ENCODE measurements at regions of chr5 and their contacts with region 1.

Region 1: DNA sequence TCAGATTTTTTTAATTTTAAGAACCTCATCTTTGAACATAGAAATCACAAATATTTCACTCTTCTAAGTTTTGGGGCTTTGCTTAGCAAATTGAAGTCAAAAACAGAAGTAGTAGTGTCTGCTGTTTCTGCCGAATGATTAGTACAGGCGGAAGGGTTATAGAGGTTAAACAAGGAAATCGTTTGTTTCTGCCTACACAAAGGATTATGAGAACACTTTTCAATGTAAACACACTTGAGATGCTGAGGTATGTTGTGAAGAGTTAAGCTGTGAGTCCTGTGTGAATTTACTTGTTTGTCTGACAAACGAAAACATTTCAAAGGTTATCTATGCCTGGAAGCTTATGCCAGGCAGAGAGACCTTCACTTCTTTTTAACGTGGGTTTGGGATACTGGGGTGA is 224.8 kb downstream of the CETN3 start:
- DNase-seq: no peak
- H3K4me3 ChIP-seq: no peak overlapping the region
- H3K27ac ChIP-seq: no peak overlapping the region
- H3K4me1 ChIP-seq: no peaks in the 10 kb centered on the region
- H3K27me3 ChIP-seq: no peaks in the 10 kb centered on the region
- CTCF ChIP-seq: no peak

Region 2: DNA sequence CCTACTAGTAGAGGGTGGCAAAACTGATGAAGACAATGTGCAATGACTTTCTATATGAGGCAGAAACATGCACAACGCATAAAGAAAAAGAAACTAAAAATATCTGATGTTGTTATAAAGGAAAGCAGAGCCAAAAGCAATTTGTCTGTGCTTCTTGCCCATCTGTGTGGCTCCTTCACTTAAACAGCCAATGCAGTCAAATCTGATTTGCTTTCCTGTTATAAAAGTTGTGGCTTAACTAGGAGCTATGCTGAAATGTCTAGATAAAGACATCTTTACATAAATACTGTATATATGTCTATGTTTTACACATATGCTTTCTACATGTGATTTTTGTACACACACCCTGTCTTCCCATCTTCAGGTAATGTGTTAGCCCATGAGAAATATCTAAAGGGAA is 283.4 kb before region 1 on chr5:
- CTCF ChIA-PET with region 1: no interaction called
- POLR2A ChIA-PET with region 1: no interaction called
- intact Hi-C with region 1: no loop called
- DNase-seq: no peak
- H3K4me3 ChIP-seq: no peak overlapping the region
- H3K27ac ChIP-seq: no peak overlapping the region
- H3K4me1 ChIP-seq: no peaks in the 10 kb centered on the region
- H3K27me3 ChIP-seq: no peaks in the 10 kb centered on the region
- CTCF ChIP-seq: no peak

Region 3: DNA sequence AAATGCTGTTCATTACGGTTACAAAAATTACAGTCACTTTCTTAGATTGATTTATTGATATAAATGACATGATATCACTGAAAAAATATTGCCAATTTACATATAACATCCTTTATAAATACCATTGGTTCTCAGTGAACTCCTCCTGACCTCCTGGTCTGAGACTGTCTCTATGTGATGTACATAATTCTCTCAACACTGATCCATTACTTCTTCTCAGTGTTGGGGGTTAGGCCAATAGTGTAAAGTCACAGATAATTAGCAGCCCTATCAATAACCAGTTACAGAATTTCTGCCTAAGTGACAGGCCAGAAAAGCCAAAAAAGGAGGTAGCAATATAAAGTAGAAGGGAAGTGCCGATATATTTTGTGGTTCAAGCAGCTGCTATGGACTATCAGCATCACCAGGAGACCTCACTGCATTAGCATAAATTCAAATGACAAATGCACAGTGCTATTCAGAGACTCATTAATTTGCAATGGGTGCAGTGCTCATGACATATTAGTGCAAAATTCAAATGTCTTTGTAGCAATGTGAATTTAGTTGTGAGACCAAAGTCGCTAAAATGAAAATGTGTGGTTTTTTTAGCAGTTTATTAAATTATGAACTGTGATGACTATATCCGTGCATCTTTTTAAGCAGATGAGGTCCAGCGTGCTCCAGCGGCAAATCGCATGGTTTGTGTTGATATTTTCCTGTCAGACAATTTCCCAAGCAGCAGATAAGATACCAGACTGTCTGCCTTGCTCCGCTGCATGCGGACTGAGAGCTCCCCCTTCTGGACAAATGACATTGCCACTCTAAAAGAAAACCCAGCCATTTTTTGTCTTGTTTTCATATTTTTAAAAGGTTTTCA is 80.2 kb after region 1 on chr5:
- CTCF ChIA-PET with region 1: no interaction called
- POLR2A ChIA-PET with region 1: no interaction called
- intact Hi-C with region 1: loop called (anchors 5 kb)
- DNase-seq: peak; percentile 78
- H3K4me3 ChIP-seq: no peak overlapping the region
- H3K27ac ChIP-seq: no peak overlapping the region
- H3K4me1 ChIP-seq: peaks cover 3% of the 10 kb centered on the region
- H3K27me3 ChIP-seq: no peaks in the 10 kb centered on the region
- CTCF ChIP-seq: peak; percentile 95

Measured in A673 (cell line).